Activated T-helper 1 cell treated with anti-CD3 and anti-CD28 coated beads, Interleukin-12 subunit alpha, Interleukin-12 subunit beta, Interleukin-2, Interleukin-4 antibody, amounts not matched to agents 30 ng/mL and 10 ng/mL and 1 ng/mL, durations not matched to agents 14 hours and 24 hours and 36 hours (primary cell): ENCODE measurements at regions of chr1 and their contacts with region 1.

Region 1: GRCh38 chr1:155208541-155209311 is at the start of gene MTX1:
- DNase-seq: peak; percentile 85
- H3K4me3 Mint-ChIP-seq: peak within 1 kb of the TSS; percentile 93
- H3K27ac Mint-ChIP-seq: peak within 1 kb of the TSS; percentile 97
- H3K4me1 Mint-ChIP-seq: peaks cover 25% of the 10 kb centered on the region
- H3K27me3 Mint-ChIP-seq: no peaks in the 10 kb centered on the region
- total RNA-seq, gene MTX1: 61.8 and 62.3 TPM in 2 replicates

Region 2: GRCh38 chr1:155193275-155193990 is 15.3 kb before region 1 on chr1:
- intact Hi-C with region 1: loop called (anchors 1 kb)
- DNase-seq: peak; percentile 72
- H3K4me3 Mint-ChIP-seq: peak overlapping the region; percentile 88
- H3K27ac Mint-ChIP-seq: peak overlapping the region; percentile 97
- H3K4me1 Mint-ChIP-seq: peaks cover 39% of the 10 kb centered on the region
- H3K27me3 Mint-ChIP-seq: no peaks in the 10 kb centered on the region

Region 3: DNA sequence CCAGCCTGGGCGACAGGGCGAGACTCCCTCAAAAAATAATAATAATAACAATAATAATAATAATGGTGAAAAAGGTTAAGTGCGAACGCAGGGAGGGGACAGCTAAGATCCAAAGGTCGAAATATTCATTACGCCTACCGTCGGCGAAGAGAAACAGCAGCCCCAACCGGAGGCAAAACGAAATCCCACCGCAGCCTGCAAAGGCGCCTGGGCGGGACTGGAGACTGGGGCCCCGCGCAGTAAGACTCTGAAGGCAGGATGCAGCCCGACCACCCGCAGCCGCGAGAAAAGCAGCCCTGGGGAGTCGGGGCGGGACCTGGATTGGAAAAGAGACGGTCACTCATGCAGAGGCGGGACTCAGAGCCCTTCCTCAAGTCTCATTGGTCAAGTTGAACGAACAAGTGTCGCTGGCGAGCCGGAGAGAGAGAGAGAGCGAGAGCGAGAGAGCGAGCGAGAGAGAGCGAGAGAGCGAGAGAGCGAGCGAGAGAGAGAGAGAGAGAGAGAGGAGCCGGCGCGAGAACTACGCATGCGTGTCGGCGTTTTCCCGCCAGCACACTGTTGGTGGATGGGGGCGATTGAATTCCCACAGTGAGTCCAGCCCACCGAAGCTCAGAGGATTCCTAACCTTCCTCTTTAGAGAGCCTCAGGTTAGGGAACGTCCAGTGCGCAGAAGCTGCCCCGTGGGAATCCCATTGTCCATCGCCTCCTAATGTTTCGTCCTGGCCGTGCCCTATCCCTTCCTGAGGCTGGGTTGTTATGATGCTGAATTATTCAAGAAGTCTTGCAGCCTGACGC is 35.8 kb after region 1 on chr1:
- intact Hi-C with region 1: loop called (anchors 1 kb)
- DNase-seq: peak; percentile 95
- H3K4me3 Mint-ChIP-seq: peak overlapping the region; percentile 86
- H3K27ac Mint-ChIP-seq: peak overlapping the region; percentile 100
- H3K4me1 Mint-ChIP-seq: peaks cover 50% of the 10 kb centered on the region
- H3K27me3 Mint-ChIP-seq: peaks cover 2% of the 10 kb centered on the region

Region 4: GRCh38 chr1:155277070-155277895 is 68.6 kb after region 1 on chr1 and contains the start of gene HCN3:
- intact Hi-C with region 1: loop called (anchors 1 kb)
- DNase-seq: peak; percentile 91
- H3K4me3 Mint-ChIP-seq: peak within 1 kb of the TSS; percentile 83
- H3K27ac Mint-ChIP-seq: peak within 1 kb of the TSS; percentile 62
- H3K4me1 Mint-ChIP-seq: peaks cover 38% of the 10 kb centered on the region
- H3K27me3 Mint-ChIP-seq: peaks cover 7% of the 10 kb centered on the region
- total RNA-seq, gene HCN3: 2.5 and 3.3 TPM in 2 replicates

Region 5: DNA sequence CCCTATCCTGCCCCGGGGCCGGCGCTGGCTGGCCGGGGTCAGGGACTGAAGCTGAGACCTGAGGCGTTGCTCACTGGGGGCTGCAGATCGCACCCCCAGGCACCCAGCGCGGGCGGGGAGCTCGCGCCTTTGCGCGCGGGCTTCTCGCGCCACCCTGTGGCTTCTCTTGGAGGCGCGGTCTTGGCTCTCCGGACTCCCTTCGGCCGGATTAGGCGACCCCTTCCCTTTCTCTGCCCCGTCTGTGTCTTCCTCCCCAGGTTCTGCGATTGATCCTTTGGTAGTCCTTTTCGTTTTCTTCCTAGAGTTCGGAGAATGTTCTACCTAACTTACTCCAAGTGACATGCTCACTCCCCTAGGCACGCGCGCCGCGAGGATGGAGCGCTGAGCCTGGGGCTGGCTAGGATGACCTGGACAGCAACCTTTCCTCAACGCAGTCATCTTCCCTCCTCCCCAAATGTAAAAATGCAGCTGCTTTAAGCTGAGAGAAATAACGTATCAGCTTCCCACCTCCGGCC is 1651.4 kb after region 1 on chr1:
- intact Hi-C with region 1: loop called (anchors 5 kb)
- DNase-seq: peak; percentile 53
- H3K4me3 Mint-ChIP-seq: peak overlapping the region; percentile 88
- H3K27ac Mint-ChIP-seq: peak overlapping the region; percentile 80
- H3K4me1 Mint-ChIP-seq: peaks cover 56% of the 10 kb centered on the region
- H3K27me3 Mint-ChIP-seq: peaks cover 15% of the 10 kb centered on the region